Naive thymus-derived CD4-positive, alpha-beta T cell (primary cell): ENCODE measurements at regions of chr2 and their contacts with region 1.

Region 1: DNA sequence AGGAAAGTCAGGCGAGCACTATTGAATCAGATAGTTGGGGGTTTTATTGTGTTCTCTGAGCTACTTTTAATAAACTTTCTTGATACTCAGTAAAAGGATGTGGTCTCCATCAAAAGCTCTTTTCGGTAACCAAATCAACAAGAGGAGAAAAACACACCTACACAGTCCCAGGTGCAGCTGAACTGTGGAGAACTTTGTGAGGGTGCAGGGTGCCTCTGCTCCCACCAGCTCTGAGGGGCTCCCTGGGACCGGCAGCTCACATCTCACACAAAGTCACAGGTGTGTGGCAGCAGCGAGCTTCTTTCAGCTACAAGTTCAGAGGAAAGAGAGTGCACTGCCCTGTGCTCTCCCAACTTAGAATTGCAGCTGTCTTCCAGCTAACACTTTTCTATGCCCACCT is 650.4 kb downstream of the RNF144A start:
- DNase-seq: peak; percentile 16 to 92 (median 79)
- ATAC-seq: peak; percentile 92
- H3K4me3 ChIP-seq: peak overlapping the region; percentile 14
- H3K4me3 Mint-ChIP-seq: peak overlapping the region; percentile 48 to 79 (median 72)
- H3K27ac ChIP-seq: peak overlapping the region; percentile 61
- H3K27ac Mint-ChIP-seq: peak overlapping the region; percentile 89 to 99 (median 96)
- H3K4me1 ChIP-seq: peaks cover 17 to 45% of the 10 kb centered on the region in 2 donors
- H3K4me1 Mint-ChIP-seq: peaks cover 30 to 72% (median 66%) of the 10 kb centered on the region in 7 donors
- H3K27me3 ChIP-seq: no peaks in the 10 kb centered on the region
- H3K27me3 Mint-ChIP-seq: no peaks in the 10 kb centered on the region

Region 2: GRCh38 chr2:7203055-7203467 is 364.6 kb before region 1 on chr2:
- CTCF ChIA-PET with region 1: no interaction called
- POLR2A ChIA-PET with region 1: interaction called, 4 read pairs
- intact Hi-C with region 1: loop called in 1 of 2 experiments (anchors 10 kb)
- DNase-seq: peak; percentile 31 to 65 (median 55)
- ATAC-seq: peak; percentile 81
- H3K4me3 ChIP-seq: no peak overlapping the region
- H3K4me3 Mint-ChIP-seq: no peak overlapping the region
- H3K27ac ChIP-seq: no peak overlapping the region
- H3K27ac Mint-ChIP-seq: no peak overlapping the region
- H3K4me1 ChIP-seq: no peaks in the 10 kb centered on the region
- H3K4me1 Mint-ChIP-seq: peaks cover 0 to 6% (median 0%) of the 10 kb centered on the region in 7 donors
- H3K27me3 ChIP-seq: no peaks in the 10 kb centered on the region
- H3K27me3 Mint-ChIP-seq: no peaks in the 10 kb centered on the region

Region 3: DNA sequence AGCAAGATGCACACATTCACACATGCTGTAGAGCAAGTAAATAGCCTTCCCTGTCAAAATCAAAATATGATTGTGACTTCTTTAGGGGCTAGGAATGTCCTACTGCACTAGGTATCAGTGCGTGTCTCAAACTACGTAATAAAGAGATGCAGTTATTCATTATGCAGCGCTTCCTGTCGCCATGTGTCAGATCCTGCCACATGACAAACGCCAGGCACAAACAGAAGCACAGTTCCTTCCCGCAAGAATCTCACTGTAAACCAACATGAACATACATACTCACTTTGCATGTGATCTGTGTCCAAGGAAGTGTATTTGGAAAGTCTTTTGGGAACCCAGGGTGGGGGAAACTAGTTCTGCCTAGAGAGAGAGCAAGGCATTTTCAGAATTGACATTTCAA is 50.6 kb before region 1 on chr2:
- CTCF ChIA-PET with region 1: no interaction called
- POLR2A ChIA-PET with region 1: interaction called, 3 read pairs
- intact Hi-C with region 1: loop called in 1 of 2 experiments (anchors 1 kb)
- DNase-seq: peak in 7 of 9 donors; percentile 28 to 63 (median 49)
- ATAC-seq: peak; percentile 89
- H3K4me3 ChIP-seq: peak overlapping the region; percentile 12
- H3K4me3 Mint-ChIP-seq: peak overlapping the region; percentile 20 to 82 (median 77)
- H3K27ac ChIP-seq: peak overlapping the region; percentile 35
- H3K27ac Mint-ChIP-seq: peak overlapping the region; percentile 71 to 97 (median 88)
- H3K4me1 ChIP-seq: peaks cover 0 to 16% of the 10 kb centered on the region in 2 donors
- H3K4me1 Mint-ChIP-seq: peaks cover 13 to 68% (median 51%) of the 10 kb centered on the region in 7 donors
- H3K27me3 ChIP-seq: no peaks in the 10 kb centered on the region
- H3K27me3 Mint-ChIP-seq: no peaks in the 10 kb centered on the region

Region 4: DNA sequence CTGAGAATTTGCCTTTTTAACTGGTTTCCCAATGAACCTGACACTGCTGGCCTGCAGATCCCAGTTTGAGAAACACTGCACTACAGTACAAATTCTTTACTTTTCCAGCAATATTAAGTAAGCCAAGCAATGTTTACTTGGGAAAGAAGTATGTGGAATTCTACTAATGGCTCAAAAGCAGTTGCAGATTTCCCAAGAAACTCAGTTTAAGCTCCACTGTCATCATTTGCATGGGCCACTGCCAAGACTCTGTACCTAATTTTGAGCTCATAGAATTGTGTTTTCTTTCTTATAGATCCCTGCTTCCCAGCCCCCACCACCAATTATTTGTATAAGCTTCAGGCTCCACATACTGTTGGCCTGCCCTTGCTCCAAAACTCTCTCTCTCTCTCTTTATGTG is 25.7 kb after region 1 on chr2:
- CTCF ChIA-PET with region 1: interaction called, 10 read pairs
- POLR2A ChIA-PET with region 1: interaction called, 5 read pairs
- intact Hi-C with region 1: no loop called
- DNase-seq: no peak
- ATAC-seq: no peak
- H3K4me3 ChIP-seq: no peak overlapping the region
- H3K4me3 Mint-ChIP-seq: no peak overlapping the region
- H3K27ac ChIP-seq: no peak overlapping the region
- H3K27ac Mint-ChIP-seq: peak overlapping the region in 1 of 9 donors; percentile 57
- H3K4me1 ChIP-seq: no peaks in the 10 kb centered on the region
- H3K4me1 Mint-ChIP-seq: peaks cover 2 to 21% (median 11%) of the 10 kb centered on the region in 7 donors
- H3K27me3 ChIP-seq: no peaks in the 10 kb centered on the region
- H3K27me3 Mint-ChIP-seq: peaks cover 0 to 4% (median 0%) of the 10 kb centered on the region in 5 donors

Region 5: DNA sequence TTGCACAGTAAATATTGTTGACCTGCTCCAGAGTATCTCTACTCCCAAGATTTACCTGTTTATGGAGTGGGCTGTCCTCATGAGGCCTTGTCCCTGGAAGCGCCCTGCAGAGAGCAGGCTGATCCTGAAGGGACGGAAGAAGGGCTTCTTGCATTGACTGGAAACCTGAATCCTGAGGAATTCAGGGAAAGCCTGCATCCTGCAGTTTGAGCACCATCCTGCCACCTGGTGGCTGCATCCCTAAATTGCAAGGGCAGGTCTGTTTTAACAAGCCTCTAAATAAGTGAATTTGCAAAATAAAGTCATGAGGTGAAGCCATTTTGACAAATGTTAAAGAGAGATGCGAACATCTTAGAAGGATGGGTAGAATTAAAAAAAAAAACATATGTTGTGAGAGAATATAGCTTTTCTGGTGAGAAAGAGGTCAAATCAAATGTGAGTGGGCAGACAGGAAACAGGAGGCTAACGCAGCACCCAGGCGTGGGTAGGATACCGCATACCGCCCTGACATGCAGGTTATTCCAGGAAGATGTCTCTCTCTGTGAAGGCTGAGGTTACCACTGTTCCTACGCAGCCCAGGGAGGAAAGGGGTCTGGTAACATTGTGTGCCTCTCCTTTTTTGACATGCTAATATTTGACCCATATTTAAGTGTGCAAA is 104.5 kb after region 1 on chr2:
- CTCF ChIA-PET with region 1: interaction called, 19 read pairs
- POLR2A ChIA-PET with region 1: no interaction called
- intact Hi-C with region 1: loop called (anchors 1 to 2 kb)
- DNase-seq: peak in 8 of 9 donors; percentile 17 to 69 (median 47)
- ATAC-seq: peak; percentile 61
- H3K4me3 ChIP-seq: no peak overlapping the region
- H3K4me3 Mint-ChIP-seq: peak overlapping the region; percentile 16 to 84 (median 69)
- H3K27ac ChIP-seq: no peak overlapping the region
- H3K27ac Mint-ChIP-seq: peak overlapping the region; percentile 77 to 91 (median 87)
- H3K4me1 ChIP-seq: peaks cover 9 to 19% of the 10 kb centered on the region in 2 donors
- H3K4me1 Mint-ChIP-seq: peaks cover 24 to 59% (median 40%) of the 10 kb centered on the region in 7 donors
- H3K27me3 ChIP-seq: no peaks in the 10 kb centered on the region
- H3K27me3 Mint-ChIP-seq: no peaks in the 10 kb centered on the region

Region 6: DNA sequence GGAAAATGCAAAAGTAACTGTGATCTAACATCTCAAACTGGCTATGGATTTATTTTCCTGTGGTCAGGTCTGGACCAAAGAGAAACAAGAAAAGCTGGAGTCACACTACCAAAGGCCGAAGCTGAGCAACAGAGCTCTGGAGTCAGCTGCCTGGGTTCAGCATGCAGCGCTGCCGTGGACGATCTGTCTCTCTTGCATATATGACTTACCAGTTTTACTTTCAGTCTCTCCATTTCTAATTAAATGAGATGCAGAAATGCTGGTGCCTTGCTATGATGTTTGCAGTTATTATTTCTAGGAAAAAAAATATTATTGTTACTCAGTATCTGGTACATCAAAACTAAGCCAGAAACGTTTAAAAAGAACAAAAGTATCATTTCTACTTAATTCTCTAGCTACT is 162.8 kb after region 1 on chr2:
- CTCF ChIA-PET with region 1: interaction called, 3 read pairs
- POLR2A ChIA-PET with region 1: interaction called, 4 read pairs
- intact Hi-C with region 1: loop called (anchors 2 to 5 kb)
- DNase-seq: peak in 3 of 9 donors; percentile 6 to 20 (median 8)
- ATAC-seq: no peak
- H3K4me3 ChIP-seq: peak overlapping the region; percentile 48
- H3K4me3 Mint-ChIP-seq: peak overlapping the region; percentile 55 to 90 (median 83)
- H3K27ac ChIP-seq: peak overlapping the region; percentile 20
- H3K27ac Mint-ChIP-seq: peak overlapping the region; percentile 32 to 94 (median 85)
- H3K4me1 ChIP-seq: peaks cover 11 to 38% of the 10 kb centered on the region in 2 donors
- H3K4me1 Mint-ChIP-seq: peaks cover 7 to 58% (median 35%) of the 10 kb centered on the region in 7 donors
- H3K27me3 ChIP-seq: no peaks in the 10 kb centered on the region
- H3K27me3 Mint-ChIP-seq: no peaks in the 10 kb centered on the region

Region 7: DNA sequence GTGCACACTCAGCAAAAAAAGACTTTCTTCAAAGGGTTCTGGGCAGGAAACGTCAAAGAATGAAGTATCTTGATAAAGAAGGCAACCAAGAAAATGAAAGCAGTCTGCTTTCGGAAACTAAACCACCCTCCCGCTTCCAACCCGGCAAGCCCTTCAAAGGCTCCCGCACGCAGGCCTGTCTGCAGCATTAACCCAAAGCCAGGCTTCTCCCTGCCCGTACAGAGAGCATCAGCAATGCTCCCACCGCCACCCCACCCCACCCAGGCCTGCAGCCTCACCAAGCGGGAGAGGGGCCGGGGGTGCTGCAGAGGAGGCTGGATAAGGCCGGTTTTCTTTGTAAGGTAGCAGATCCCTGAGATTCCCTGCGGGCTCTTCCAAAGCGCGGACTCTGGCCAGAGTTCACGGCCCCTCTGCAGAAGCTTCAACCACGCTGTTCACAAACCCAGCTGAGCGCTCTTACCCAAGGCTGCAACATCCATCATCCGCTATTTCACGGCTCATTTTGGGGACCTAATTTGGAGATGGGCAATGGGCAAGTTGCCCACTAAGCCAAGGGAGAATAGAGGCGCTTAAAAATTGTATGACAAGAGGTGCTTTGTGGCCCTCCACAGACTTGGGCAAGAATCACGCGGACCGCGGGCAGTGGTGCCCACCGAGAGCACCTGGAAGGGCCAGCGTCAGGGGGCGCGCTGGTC is 888.7 kb after region 1 on chr2:
- CTCF ChIA-PET with region 1: no interaction called
- POLR2A ChIA-PET with region 1: no interaction called
- intact Hi-C with region 1: loop called in 1 of 2 experiments (anchors 5 kb)
- DNase-seq: peak in 8 of 9 donors; percentile 44 to 71 (median 58)
- ATAC-seq: peak; percentile 75
- H3K4me3 ChIP-seq: peak overlapping the region; percentile 60
- H3K4me3 Mint-ChIP-seq: peak overlapping the region; percentile 68 to 88 (median 84)
- H3K27ac ChIP-seq: no peak overlapping the region
- H3K27ac Mint-ChIP-seq: peak overlapping the region in 8 of 9 donors; percentile 2 to 94 (median 54)
- H3K4me1 ChIP-seq: peaks cover 11 to 21% of the 10 kb centered on the region in 2 donors
- H3K4me1 Mint-ChIP-seq: peaks cover 13 to 45% (median 25%) of the 10 kb centered on the region in 7 donors
- H3K27me3 ChIP-seq: no peaks in the 10 kb centered on the region
- H3K27me3 Mint-ChIP-seq: peaks cover 0 to 17% (median 6%) of the 10 kb centered on the region in 5 donors